Posterior vena cava (tissue), 2 donors: ENCODE measurements at regions of chr11 and their contacts with region 1.

Region 1: GRCh38 chr11:120073196-120073595 is 64.7 kb downstream of the TRIM29 start:
- DNase-seq: no peak

Region 2: GRCh38 chr11:119856681-119857485 is 216.3 kb before region 1 on chr11:
- intact Hi-C with region 1: loop called in 1 of 2 experiments (anchors 2 kb)
- DNase-seq: no peak

Region 3: DNA sequence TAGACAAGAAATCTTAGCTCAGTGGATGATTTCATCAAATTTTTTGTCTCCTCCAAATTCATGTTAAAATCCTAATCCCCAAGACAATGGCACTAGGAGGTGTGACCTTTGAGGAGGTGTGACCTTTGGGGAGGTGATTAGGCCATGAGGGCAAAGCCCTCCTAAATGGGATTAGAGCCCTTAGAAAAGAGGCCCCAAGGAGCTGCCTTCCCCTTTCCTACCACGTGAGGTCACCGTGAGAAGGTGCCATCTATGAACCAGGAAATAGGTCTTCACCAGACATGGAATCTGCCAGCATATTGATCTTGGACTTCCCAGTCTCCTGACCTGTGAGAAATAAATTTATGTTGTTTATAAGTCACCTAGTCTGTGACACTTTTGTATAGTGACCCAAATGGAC is 74.0 kb before region 1 on chr11:
- intact Hi-C with region 1: no loop called
- DNase-seq: no peak

Region 4: DNA sequence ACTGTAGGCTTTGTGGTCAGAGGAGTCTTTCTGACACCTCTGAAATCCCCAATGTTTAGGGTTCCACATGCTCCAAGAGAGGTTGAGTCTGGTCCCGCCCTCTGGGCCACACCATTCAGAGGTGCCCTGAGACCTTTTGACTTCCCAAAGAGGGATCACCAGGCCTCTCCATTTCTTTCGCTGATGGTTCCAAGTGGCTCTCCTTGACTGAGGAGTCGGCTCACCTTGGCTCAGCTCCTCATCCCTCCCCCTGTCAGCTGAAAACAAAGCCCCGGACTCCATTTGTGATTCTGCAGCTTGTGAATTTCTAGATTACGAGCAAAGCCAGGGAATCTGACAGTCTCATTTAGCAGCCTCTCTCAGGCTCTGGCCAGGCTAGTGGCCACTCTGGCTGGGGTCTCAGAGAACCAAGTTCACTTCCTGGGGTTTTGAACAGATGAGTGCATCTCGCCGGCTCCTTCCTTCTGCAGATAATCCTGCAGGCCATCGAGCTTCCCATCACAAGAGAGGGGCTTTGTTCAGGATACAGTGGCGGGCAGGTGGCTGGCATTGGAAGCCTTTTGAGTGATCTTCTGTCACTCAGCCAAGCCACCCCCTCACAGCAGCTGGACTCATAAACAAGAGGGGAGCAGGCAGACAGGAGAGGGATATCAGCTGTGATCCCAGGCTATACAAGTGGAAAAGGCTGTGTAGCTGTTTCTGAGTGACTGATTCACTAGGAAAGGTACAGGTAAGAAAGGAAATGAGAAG is 38.1 kb before region 1 on chr11:
- intact Hi-C with region 1: no loop called
- DNase-seq: peak; percentile 49